ENCODE measurements at regions of chr9 and their contacts with region 1.

Region 1: DNA sequence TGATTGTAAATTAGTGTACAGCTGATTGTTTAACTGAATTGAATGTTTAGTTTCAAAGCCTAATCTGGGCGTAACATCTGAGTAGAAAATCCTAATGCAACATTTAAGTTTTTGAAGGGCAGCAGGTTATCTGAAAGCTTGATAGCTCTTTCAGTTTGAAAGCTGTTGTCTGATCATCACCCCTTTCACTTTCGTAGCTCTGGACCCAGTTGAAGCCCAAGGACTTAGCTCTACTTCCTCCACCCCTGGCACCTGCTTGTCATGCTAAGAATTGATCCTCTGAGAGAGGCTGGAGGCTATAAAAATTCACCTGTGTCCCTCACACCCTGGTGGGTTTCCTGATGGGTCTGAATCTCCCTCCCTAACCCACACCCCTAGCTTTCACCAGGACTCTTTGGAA is 86.0 kb downstream of the ZFAND5 start:
- DNase-seq: no peak
- H3K4me3 ChIP-seq: no peak overlapping the region
- H3K27ac ChIP-seq: no peak overlapping the region
- H3K4me1 ChIP-seq: no peaks in the 10 kb centered on the region
- H3K27me3 ChIP-seq: no peaks in the 10 kb centered on the region
- CTCF ChIP-seq: no peak
- POLR2A ChIP-seq: no peak

Region 2: DNA sequence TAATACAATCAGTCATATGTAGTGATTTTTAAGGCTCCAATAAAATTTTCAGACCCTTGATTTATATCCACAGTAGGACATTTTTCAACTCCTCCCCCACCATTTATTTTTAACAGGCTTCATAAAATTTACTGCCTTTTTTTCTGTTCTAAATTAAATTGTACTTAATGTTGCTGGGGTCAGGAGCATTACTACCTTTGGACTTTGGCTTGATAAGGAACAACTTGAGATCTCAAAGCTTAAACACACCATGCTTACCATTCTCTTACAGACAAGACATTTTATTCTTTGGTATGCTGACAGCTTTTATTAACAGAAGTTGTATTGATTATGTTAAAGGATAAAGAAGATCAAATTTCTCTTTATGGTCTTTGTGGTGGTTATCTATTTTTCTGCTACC is 1188.1 kb before region 1 on chr9:
- intact Hi-C with region 1: no loop called
- DNase-seq: no peak
- H3K4me3 ChIP-seq: no peak overlapping the region
- H3K27ac ChIP-seq: no peak overlapping the region
- H3K4me1 ChIP-seq: no peaks in the 10 kb centered on the region
- H3K27me3 ChIP-seq: no peaks in the 10 kb centered on the region
- CTCF ChIP-seq: no peak
- POLR2A ChIP-seq: no peak

Region 3: DNA sequence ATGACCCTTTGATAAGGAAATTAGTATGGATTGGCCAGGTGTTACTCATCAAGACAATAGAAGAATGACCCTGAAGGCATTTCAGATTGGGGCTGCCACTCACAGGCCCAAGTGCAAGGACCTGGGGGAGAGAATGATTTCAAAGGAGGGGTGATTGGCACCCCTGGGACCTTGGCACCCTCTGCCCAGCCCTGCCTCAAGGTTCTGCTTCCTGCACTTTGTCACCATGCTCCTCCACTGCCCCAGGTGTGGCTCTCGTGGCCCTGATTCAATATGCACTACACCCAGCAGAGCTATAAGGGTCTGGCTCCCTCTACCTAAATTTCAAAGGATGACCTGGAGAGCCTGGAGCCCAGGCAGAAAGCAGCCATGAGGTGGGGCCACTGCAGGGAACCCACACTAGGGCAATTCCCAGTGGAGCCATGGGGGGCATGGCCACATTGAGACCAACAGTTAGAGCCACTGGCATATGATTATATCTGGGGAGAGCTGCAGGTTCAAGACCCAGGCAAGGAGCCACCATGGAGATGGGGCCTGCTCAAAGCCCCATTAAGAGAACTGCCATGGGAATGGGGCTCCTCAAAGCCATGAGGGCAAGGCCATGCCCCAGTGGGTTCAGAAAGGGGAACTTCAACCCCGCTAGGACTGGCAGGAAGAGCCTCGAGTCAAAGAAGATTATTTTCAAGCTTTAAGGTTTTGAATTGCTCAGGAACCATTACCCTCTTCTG is 603.7 kb before region 1 on chr9:
- intact Hi-C with region 1: loop called (anchors 5 kb)
- DNase-seq: no peak
- H3K4me3 ChIP-seq: no peak overlapping the region
- H3K27ac ChIP-seq: no peak overlapping the region
- H3K4me1 ChIP-seq: peaks cover 0 to 5% of the 10 kb centered on the region in 2 donors
- H3K27me3 ChIP-seq: no peaks in the 10 kb centered on the region
- CTCF ChIP-seq: no peak
- POLR2A ChIP-seq: no peak

Region 4: GRCh38 chr9:72200452-72200851 is 78.5 kb before region 1 on chr9:
- intact Hi-C with region 1: loop called (anchors 2 kb)
- DNase-seq: no peak
- H3K4me3 ChIP-seq: no peak overlapping the region
- H3K27ac ChIP-seq: no peak overlapping the region
- H3K4me1 ChIP-seq: no peaks in the 10 kb centered on the region
- H3K27me3 ChIP-seq: no peaks in the 10 kb centered on the region
- CTCF ChIP-seq: no peak
- POLR2A ChIP-seq: no peak

Measured in breast epithelium (tissue), 4 donors.